ENCODE measurements at regions of chr18 and their contacts with region 1.

Region 1: GRCh38 chr18:49510393-49511115 is 23.5 kb upstream of the C18orf32 start:
- DNase-seq: peak; percentile 37 to 69 (median 65)
- ATAC-seq: peak; percentile 62
- H3K4me3 ChIP-seq: no peak overlapping the region
- H3K27ac ChIP-seq: no peak overlapping the region
- H3K4me1 ChIP-seq: no peaks in the 10 kb centered on the region
- H3K27me3 ChIP-seq: no peaks in the 10 kb centered on the region

Region 2: DNA sequence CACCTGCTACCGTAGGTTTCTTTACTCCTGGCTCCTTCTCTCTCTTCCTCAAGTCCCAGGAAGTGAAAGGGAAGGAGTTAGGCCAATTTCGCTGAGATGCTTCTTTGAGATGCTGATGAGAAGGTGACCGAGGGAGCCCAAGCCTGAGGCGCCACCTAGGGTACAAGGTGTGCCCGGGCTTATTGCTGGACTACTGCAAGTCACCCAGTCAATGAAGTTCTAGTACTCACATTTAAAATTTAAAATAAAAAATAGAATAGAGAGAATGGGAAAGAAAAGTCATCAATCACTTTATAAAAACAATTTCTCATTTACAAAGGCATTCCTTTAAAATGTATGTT is 257.5 kb after region 1 on chr18:
- intact Hi-C with region 1: loop called in 1 of 4 experiments (anchors 10 kb)
- DNase-seq: peak; percentile 37 to 75 (median 74)
- ATAC-seq: peak; percentile 60 to 66
- H3K4me3 ChIP-seq: no peak overlapping the region
- H3K27ac ChIP-seq: no peak overlapping the region
- H3K4me1 ChIP-seq: no peaks in the 10 kb centered on the region
- H3K27me3 ChIP-seq: no peaks in the 10 kb centered on the region

Region 3: GRCh38 chr18:49858309-49859020 is 347.9 kb after region 1 on chr18:
- intact Hi-C with region 1: loop called (anchors 2 to 5 kb)
- DNase-seq: peak; percentile 54 to 73 (median 73)
- ATAC-seq: peak; percentile 36 to 72
- H3K4me3 ChIP-seq: no peak overlapping the region
- H3K27ac ChIP-seq: no peak overlapping the region
- H3K4me1 ChIP-seq: no peaks in the 10 kb centered on the region
- H3K27me3 ChIP-seq: no peaks in the 10 kb centered on the region

Measured in right cardiac atrium (tissue), 5 donors.